ENCODE measurements at regions of chr6 and their contacts with region 1.

Region 1: DNA sequence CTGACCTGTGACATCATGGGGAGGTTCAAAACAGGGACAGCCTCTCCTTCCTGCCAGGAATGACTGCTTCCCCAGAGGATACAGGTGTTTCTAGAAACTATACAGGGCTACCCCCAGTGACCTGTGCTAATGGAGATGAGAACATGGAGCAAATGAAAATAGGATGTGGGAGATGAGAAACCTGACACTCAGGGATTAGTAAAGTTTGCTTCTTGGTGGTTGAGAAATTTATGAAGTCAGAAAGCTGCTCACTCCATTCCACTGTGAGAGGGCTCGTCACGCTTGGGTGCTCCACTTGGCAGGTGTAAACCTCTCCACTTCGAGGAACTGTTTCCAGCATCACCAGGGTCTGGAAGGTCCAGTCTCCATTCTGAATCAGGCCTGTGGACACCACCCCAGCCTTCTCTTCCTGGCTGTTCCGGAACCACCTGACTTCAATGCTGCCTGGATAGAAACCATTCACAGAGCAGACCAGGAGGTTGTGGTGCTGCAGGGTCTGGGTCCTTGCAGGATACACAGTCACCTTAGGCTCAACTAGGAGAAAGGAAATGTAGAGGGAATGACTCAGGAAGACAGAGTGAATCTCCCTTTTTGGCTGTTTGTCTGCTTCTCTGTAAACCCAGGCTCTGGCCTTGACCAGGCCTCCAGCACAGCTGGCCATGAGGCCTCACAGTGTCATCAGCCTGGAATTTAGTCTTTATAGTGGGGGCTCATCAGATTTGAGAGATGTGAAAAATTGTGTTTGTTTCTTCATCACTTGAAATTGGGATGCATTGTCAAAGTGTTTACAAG is 10.8 kb downstream of the HLA-DRB5 start:
- DNase-seq: no peak
- H3K4me3 ChIP-seq: no peak overlapping the region
- H3K27ac ChIP-seq: no peak overlapping the region
- H3K4me1 ChIP-seq: no peaks in the 10 kb centered on the region
- H3K27me3 ChIP-seq: no peaks in the 10 kb centered on the region
- CTCF ChIP-seq: no peak
- EP300 ChIP-seq: no peak
- POLR2A ChIP-seq: no peak

Region 2: GRCh38 chr6:32108094-32108627 is 411.2 kb before region 1 on chr6:
- in situ Hi-C with region 1: no loop called
- intact Hi-C with region 1: no loop called
- DNase-seq: peak; percentile 48
- H3K4me3 ChIP-seq: peak overlapping the region in 3 of 4 donors; percentile 3 to 38 (median 23)
- H3K27ac ChIP-seq: peak overlapping the region; percentile 74 to 78 (median 74)
- H3K4me1 ChIP-seq: peaks cover 14 to 39% (median 24%) of the 10 kb centered on the region in 4 donors
- H3K27me3 ChIP-seq: peaks cover 3% of the 10 kb centered on the region
- CTCF ChIP-seq: no peak
- EP300 ChIP-seq: no peak
- POLR2A ChIP-seq: no peak

Region 3: DNA sequence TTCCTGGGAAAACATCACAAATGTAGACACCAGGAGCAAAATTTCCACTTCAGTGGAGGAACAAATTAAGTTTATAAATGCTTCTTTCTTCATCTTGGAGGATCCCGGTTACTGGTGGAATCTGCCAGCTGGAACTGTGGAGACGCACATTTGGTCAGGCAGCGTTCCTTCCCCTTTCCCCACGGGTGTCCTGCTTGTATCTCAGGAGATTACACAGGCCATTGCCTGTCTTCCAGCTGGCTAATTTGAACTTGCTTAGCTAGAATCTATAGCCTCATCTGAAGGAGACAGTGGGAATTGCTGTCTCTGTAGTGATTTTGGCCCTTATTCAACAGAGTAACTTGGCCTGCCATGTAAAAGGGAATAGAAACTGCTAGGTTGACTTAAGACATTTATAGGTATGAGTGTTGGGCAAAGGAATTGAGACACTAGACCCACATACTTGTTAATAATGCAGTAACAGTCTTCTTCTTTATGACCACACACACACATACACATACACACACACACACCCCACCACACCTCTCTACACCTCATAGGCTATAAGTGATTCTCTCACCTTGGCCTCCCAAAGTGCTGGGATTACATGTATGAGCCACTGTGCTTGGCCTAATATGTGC is 182.0 kb before region 1 on chr6:
- in situ Hi-C with region 1: no loop called
- intact Hi-C with region 1: no loop called
- DNase-seq: no peak
- H3K4me3 ChIP-seq: no peak overlapping the region
- H3K27ac ChIP-seq: no peak overlapping the region
- H3K4me1 ChIP-seq: no peaks in the 10 kb centered on the region
- H3K27me3 ChIP-seq: no peaks in the 10 kb centered on the region
- CTCF ChIP-seq: no peak
- EP300 ChIP-seq: no peak
- POLR2A ChIP-seq: no peak

Region 4: DNA sequence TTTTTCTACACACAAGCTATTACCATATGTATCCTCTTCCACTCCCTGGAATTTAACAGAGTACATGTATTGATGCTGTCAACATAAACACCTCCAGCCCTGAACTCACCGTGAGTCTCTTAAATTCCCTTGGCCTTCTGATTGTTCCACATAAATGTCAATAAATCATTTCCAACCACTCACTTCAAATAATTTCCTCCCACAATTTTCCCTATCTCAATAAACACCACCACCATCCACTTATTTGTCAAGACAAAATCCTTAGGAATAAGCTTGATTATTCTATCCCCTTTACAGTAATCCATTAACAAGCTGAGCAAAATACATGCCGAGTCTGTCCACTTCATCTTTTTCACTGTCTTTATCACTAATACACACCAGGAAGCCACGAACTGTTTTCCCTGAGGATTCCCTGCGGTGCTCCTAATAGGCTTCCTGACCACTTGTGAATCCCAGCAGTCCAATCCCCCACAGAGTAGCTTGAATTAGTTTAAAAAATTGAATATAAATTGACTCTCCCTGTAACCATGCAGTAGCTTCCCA is 51.1 kb after region 1 on chr6:
- in situ Hi-C with region 1: loop called in 2 of 4 experiments (anchors 5 to 10 kb)
- intact Hi-C with region 1: no loop called
- DNase-seq: no peak
- H3K4me3 ChIP-seq: no peak overlapping the region
- H3K27ac ChIP-seq: no peak overlapping the region
- H3K4me1 ChIP-seq: no peaks in the 10 kb centered on the region
- H3K27me3 ChIP-seq: no peaks in the 10 kb centered on the region
- CTCF ChIP-seq: no peak
- EP300 ChIP-seq: no peak
- POLR2A ChIP-seq: no peak

Region 5: GRCh38 chr6:32576250-32576649 is 56.9 kb after region 1 on chr6:
- in situ Hi-C with region 1: loop called in 2 of 4 experiments (anchors 5 to 10 kb)
- intact Hi-C with region 1: no loop called
- DNase-seq: no peak
- H3K4me3 ChIP-seq: no peak overlapping the region
- H3K27ac ChIP-seq: no peak overlapping the region
- H3K4me1 ChIP-seq: no peaks in the 10 kb centered on the region
- H3K27me3 ChIP-seq: no peaks in the 10 kb centered on the region
- CTCF ChIP-seq: no peak
- EP300 ChIP-seq: no peak
- POLR2A ChIP-seq: no peak

Measured in transverse colon (tissue), 4 donors.